ENCODE measurements at regions of chr21 and their contacts with region 1.

Region 1: DNA sequence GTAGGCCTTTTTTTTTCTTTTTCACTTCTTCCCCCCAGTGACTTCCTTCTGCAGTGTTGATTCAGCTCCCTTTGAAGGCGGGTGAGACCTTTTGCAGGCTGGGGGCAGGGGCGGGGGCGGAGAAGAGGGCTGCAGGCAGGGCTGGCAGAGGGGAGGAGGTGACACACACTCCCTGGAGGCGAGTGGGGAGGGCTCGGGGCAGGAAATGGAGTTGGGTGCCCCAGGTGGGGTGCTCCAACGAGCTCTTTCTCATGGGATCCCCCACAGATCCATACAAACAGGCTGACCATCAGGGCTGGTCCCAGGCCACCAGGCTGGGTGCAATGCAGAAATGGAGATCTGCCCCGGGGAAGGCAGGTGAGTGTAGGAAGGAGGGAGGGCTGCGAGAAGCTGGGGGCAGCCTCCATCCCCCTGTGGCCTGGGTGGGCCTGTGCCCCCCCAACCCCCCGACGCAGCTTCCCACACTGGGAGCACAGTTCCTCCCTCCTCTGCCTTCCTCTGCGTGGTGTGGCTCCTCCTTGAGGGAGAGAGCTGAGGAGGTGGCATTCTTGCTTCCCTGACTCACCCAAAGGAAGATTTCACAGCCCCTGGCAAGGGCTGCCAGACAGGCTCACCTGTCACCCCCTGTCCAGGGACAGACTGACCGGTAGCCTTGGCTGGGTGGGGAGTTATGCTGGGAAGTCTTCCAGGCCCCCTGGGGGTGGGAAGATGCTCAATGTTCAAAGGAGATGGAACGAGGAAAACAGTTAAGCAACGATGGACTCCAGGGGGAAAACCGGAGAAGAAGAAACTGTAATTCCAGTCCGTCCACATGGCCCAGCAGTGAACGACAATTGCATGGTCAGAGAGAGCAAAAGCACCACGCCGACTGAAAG is 7.1 kb upstream of the ITGB2 start:
- DNase-seq: peak; percentile 79
- ATAC-seq: peak; percentile 53
- H3K4me3 ChIP-seq: peak overlapping the region; percentile 52 to 72 (median 59)
- H3K4me3 Mint-ChIP-seq: peak overlapping the region; percentile 82
- H3K27ac ChIP-seq: peak overlapping the region; percentile 69 to 72
- H3K27ac Mint-ChIP-seq: peak overlapping the region; percentile 95
- H3K4me1 ChIP-seq: peaks cover 77 to 92% of the 10 kb centered on the region in 2 donors
- H3K4me1 Mint-ChIP-seq: peaks cover 83% of the 10 kb centered on the region
- H3K27me3 ChIP-seq: no peaks in the 10 kb centered on the region
- H3K27me3 Mint-ChIP-seq: no peaks in the 10 kb centered on the region
- CTCF ChIP-seq: no peak

Region 2: DNA sequence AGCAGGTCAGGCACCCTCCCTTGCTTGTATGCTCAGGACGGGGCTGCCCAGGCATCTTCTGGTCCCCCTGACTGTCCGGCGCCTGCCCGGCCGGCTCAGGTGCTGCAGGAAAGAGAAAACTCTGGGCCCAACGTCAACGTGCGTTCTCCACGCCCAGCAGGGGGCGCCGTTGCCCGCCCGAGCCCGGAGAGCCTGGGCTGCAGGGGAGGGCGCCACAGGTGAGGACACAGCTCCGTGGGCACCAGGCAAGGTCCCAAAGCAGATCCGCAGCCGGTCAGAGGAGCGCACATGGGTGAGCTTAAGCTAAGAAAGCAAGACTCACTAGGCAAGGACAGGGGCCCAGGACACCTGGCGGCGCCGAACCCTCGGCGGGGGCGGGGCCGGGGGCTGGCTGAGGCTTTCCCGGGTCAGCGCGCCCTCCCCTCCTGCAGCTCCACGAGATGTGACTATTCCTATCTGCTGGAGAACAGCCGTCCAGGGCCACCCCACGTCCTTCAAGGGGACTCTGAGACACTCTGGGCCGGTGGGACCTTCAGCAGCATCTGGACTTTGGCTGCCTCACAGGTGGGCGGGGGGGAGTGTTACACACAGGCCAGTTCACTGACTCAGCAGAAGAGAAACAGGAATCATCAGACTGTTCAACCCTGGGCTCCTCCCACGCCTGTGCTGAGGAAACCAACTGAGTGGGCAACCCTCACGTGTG is 417.2 kb before region 1 on chr21:
- CTCF ChIA-PET with region 1: interaction called, 7 read pairs
- POLR2A ChIA-PET with region 1: no interaction called
- intact Hi-C with region 1: loop called (anchors 5 kb)
- DNase-seq: peak; percentile 77
- ATAC-seq: peak; percentile 79
- H3K4me3 ChIP-seq: peak overlapping the region in 3 of 5 experiments; percentile 11 to 35 (median 35)
- H3K4me3 Mint-ChIP-seq: peak overlapping the region; percentile 19
- H3K27ac ChIP-seq: no peak overlapping the region
- H3K27ac Mint-ChIP-seq: no peak overlapping the region
- H3K4me1 ChIP-seq: peaks cover 9 to 11% of the 10 kb centered on the region in 2 donors
- H3K4me1 Mint-ChIP-seq: peaks cover 7% of the 10 kb centered on the region
- H3K27me3 ChIP-seq: peaks cover 0 to 9% (median 4%) of the 10 kb centered on the region in 4 experiments
- H3K27me3 Mint-ChIP-seq: peaks cover 10% of the 10 kb centered on the region
- CTCF ChIP-seq: peak; percentile 85

Region 3: DNA sequence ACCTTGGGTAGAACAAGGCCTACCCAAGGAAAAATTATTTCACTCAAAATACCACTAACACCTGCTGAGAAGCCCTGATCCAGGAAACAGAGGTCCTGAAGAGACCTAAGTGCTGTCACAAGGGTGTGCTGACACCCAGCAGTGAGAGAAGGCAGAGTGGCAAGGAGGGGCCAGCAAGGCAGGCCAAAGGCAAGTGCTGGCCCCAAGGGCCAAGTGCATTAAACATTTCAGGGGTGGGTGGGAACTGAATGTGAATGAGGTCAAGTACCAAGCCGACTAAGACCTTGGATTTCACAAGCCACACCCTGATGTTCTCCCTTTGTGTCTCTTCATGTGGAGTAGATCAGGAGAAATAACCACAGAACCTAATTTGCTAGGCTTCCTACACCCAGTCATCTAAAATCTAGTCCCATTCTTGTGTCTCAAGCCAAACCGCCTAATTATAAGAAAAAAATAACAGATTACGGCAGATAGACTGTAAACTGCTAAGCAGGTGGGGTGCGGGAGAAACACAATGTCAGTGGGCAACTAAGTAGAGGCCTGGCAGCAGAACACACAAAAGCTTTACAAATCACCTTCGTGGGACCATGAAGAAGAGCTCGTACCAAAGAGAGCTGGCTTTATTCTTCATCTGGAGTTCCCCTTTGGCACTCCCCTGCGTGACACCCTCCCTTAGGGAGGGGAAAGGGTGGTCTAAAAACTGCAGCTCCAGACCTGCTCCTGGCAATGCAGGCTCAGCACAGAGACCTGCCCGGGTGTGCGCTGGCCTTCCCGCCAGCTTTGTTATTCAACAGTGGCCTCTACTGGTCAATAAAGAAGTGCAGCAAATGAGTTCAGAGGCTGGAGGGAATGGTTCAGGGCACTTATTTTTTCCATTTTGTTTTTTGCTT is 134.9 kb before region 1 on chr21:
- CTCF ChIA-PET with region 1: interaction called, 11 read pairs
- POLR2A ChIA-PET with region 1: no interaction called
- intact Hi-C with region 1: no loop called
- DNase-seq: peak; percentile 72
- ATAC-seq: peak; percentile 78
- H3K4me3 ChIP-seq: no peak overlapping the region
- H3K4me3 Mint-ChIP-seq: no peak overlapping the region
- H3K27ac ChIP-seq: no peak overlapping the region
- H3K27ac Mint-ChIP-seq: no peak overlapping the region
- H3K4me1 ChIP-seq: peaks cover 22 to 32% of the 10 kb centered on the region in 2 donors
- H3K4me1 Mint-ChIP-seq: peaks cover 37% of the 10 kb centered on the region
- H3K27me3 ChIP-seq: no peaks in the 10 kb centered on the region
- H3K27me3 Mint-ChIP-seq: no peaks in the 10 kb centered on the region
- CTCF ChIP-seq: peak; percentile 88

Region 4: DNA sequence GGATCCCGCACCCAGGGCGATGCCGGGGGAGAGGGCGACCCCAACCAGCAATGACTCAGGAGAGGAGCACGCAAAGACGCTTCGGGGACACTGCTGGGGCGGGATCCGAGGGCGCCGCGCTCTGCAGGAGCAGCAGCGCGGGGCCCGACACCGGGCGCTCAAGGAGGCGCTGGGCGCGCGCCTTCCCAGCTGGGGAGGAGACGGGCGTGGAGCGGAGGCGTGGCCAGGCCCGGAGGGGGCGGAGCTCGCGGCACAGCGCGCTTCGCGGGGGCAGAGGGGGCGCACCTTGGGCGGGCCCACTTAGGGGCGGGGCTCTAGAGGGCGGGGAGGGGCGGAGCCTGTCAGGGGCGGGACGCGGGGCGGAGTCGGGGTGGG is 110.3 kb before region 1 on chr21:
- CTCF ChIA-PET with region 1: interaction called, 6 read pairs
- POLR2A ChIA-PET with region 1: interaction called, 5 read pairs
- intact Hi-C with region 1: loop called (anchors 5 kb)
- DNase-seq: peak; percentile 91
- ATAC-seq: peak; percentile 95
- H3K4me3 ChIP-seq: peak overlapping the region in 4 of 5 experiments; percentile 47 to 80 (median 76)
- H3K4me3 Mint-ChIP-seq: peak overlapping the region; percentile 63
- H3K27ac ChIP-seq: no peak overlapping the region
- H3K27ac Mint-ChIP-seq: peak overlapping the region; percentile 50
- H3K4me1 ChIP-seq: peaks cover 5 to 16% of the 10 kb centered on the region in 2 donors
- H3K4me1 Mint-ChIP-seq: peaks cover 10% of the 10 kb centered on the region
- H3K27me3 ChIP-seq: no peaks in the 10 kb centered on the region
- H3K27me3 Mint-ChIP-seq: no peaks in the 10 kb centered on the region
- CTCF ChIP-seq: no peak

Region 5: GRCh38 chr21:44873356-44874239 is 54.2 kb before region 1 on chr21 and contains the start of gene PTTG1IP:
- CTCF ChIA-PET with region 1: interaction called, 19 read pairs
- POLR2A ChIA-PET with region 1: interaction called, 25 read pairs
- intact Hi-C with region 1: loop called (anchors 1 kb)
- DNase-seq: peak; percentile 99
- ATAC-seq: peak; percentile 83
- H3K4me3 ChIP-seq: peak within 1 kb of the TSS; percentile 73 to 92 (median 81)
- H3K4me3 Mint-ChIP-seq: peak within 1 kb of the TSS; percentile 92
- H3K27ac ChIP-seq: peak within 1 kb of the TSS; percentile 80 to 93
- H3K27ac Mint-ChIP-seq: peak within 1 kb of the TSS; percentile 98
- H3K4me1 ChIP-seq: peaks cover 50 to 56% of the 10 kb centered on the region in 2 donors
- H3K4me1 Mint-ChIP-seq: peaks cover 60% of the 10 kb centered on the region
- H3K27me3 ChIP-seq: no peaks in the 10 kb centered on the region
- H3K27me3 Mint-ChIP-seq: no peaks in the 10 kb centered on the region
- CTCF ChIP-seq: no peak
- total RNA-seq, gene PTTG1IP: 58.6 and 62.9 TPM in 2 replicates

Region 6: GRCh38 chr21:44892536-44893277 is 35.1 kb before region 1 on chr21:
- CTCF ChIA-PET with region 1: interaction called, 204 read pairs
- POLR2A ChIA-PET with region 1: interaction called, 10 read pairs
- intact Hi-C with region 1: loop called (anchors 1 kb)
- DNase-seq: peak; percentile 82
- ATAC-seq: peak; percentile 89
- H3K4me3 ChIP-seq: no peak overlapping the region
- H3K4me3 Mint-ChIP-seq: no peak overlapping the region
- H3K27ac ChIP-seq: no peak overlapping the region
- H3K27ac Mint-ChIP-seq: no peak overlapping the region
- H3K4me1 ChIP-seq: peaks cover 3 to 16% of the 10 kb centered on the region in 2 donors
- H3K4me1 Mint-ChIP-seq: peaks cover 27% of the 10 kb centered on the region
- H3K27me3 ChIP-seq: no peaks in the 10 kb centered on the region
- H3K27me3 Mint-ChIP-seq: no peaks in the 10 kb centered on the region
- CTCF ChIP-seq: peak; percentile 89

Region 7: DNA sequence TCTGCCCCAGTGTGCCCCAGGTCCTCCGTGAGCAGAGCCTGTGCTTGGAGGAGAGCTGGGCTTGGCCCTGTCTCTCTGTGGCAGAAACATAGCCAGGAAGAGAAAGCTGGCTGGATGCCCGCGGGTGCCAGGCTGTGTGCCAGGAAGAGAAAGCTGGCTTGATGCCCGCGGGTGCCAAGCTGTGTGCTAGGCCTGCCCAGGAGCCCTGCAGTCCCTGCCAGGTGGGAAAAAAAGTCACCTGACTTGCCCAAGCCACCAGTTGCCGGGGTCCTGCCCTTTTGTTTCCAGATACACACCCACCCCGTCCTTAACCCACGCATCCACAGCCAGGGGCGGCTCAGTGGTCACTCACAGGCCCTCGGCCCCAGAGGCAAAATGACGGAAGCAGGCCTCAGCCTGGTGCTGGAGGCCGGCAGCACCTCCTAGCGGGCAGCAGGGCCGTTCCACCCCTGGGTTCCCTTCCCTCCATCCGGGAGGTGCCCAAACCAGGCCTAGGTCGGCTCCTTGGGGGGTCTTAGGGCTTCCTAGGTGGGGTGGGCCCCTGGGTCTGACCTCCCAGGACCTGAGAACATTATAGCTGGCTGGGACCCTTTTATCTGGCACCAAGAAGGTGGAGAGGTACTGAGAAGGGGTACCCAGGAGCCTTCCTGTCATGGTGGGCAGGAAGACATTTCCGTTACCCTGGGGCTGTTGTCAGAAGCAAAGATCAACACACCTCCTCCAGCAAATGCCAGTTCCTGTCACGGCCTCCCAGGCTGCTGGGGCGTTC is 16.3 kb before region 1 on chr21:
- CTCF ChIA-PET with region 1: interaction called, 108 read pairs
- POLR2A ChIA-PET with region 1: interaction called, 17 read pairs
- intact Hi-C with region 1: loop called (anchors 2 kb)
- DNase-seq: peak; percentile 58
- ATAC-seq: peak; percentile 40
- H3K4me3 ChIP-seq: peak overlapping the region in 4 of 5 experiments; percentile 1 to 48 (median 32)
- H3K4me3 Mint-ChIP-seq: peak overlapping the region; percentile 41
- H3K27ac ChIP-seq: peak overlapping the region; percentile 79 to 83
- H3K27ac Mint-ChIP-seq: peak overlapping the region; percentile 68
- H3K4me1 ChIP-seq: peaks cover 77 to 89% of the 10 kb centered on the region in 2 donors
- H3K4me1 Mint-ChIP-seq: peaks cover 77% of the 10 kb centered on the region
- H3K27me3 ChIP-seq: no peaks in the 10 kb centered on the region
- H3K27me3 Mint-ChIP-seq: no peaks in the 10 kb centered on the region
- CTCF ChIP-seq: peak; percentile 63

Measured in B cell (primary cell).